Right ventricle myocardium superior (tissue), 1 donor: ENCODE measurements at regions of chr6 and their contacts with region 1.

Region 1: DNA sequence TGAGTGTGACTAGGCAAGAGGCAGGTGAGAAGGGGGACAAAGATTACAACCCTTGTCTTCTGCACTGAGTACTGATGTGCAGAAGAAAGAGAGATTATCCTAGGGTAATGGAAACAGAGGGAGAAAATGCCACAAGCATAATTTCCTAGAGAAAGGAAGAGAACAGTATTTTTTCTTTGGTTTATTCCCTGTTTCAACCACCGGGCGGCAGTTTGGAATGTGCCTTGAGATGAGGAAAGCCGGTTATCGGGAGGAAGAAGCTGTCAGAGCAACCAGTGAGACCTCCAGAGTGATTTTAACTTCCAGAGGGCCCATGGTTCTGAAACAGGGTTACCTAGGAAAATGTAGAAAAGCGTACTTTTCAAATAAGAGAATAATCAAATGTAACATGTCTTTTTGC is 121.4 kb downstream of the REV3L start:
- DNase-seq: no peak
- ATAC-seq: peak; percentile 61

Region 2: GRCh38 chr6:111483736-111484632 is 122.3 kb after region 1 on chr6:
- intact Hi-C with region 1: loop called (anchors 10 kb)
- DNase-seq: peak; percentile 96
- ATAC-seq: peak; percentile 92

Region 3: DNA sequence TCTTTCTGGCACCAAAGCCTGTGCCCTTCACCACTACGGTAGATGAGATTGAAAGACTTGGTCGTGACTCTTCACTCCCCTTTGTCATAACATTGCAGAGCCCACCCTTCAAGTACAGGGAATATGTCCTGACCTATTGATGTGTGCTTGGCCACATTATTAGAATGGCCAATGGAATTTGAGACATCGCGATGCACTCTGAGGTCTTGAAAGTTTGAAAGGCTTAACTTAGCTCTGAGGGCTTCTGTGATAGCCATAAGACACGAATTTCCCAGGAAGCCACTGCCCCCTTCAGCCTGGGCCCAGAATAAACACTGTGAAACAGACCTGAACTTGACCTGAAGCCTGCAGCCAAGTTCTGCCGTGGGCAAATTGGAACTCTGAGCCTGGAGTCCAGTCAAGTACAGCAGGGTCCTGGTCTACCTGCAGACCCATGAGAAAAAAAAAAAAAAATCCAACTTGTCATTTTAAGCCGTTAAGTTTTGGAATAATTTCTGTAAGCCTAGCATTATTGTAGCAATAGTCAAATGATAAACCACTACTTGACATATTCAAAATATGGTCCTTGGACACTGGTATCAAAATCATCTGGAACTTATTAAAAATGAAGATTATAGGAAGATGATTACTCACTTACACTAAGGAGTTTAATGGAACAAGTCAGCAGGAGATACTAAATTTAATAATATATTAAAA is 281.0 kb after region 1 on chr6:
- intact Hi-C with region 1: loop called (anchors 10 kb)
- DNase-seq: peak; percentile 79
- ATAC-seq: peak; percentile 92